Activated CD4-positive, alpha-beta T cell treated with anti-CD3 and anti-CD28 coated beads, Interleukin-2, amount 10 ng/mL, durations not matched to agents 24 days and 14 days (primary cell): ENCODE measurements at regions of chr2 and their contacts with region 1.

Region 1: DNA sequence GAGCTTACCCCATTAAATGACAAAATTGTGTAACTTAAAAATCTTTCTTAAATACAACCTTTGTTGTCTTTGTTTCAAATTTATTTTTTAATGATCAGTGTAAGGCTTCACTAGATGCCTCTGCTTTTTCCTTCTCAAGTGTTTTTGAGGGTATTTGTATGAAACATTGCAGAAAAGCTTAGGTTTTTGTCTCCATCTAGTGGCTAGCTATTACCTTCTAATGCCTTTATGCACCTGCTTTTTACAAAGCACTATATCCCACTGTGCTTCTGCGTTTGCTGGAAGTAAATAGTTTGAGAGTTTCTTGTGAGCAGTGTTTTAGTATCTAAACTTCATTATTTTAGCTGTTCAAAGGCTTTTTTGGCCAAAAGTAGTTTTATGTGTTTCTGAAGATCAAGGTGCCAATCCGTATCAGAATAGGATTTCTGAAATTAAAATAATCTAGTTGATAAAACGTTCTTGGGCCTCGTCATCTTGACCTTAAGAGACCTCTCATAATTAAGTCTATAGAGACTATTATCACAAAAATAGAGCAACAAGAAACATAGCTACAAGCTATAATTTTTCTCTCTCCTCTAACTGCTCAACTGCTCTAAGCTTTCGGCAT is 47.0 kb downstream of the IWS1 start:
- DNase-seq: no peak
- H3K4me3 Mint-ChIP-seq: no peak overlapping the region
- H3K27ac Mint-ChIP-seq: no peak overlapping the region
- H3K4me1 Mint-ChIP-seq: no peaks in the 10 kb centered on the region
- H3K27me3 Mint-ChIP-seq: no peaks in the 10 kb centered on the region

Region 2: GRCh38 chr2:127197475-127198385 is 281.6 kb before region 1 on chr2:
- intact Hi-C with region 1: loop called (anchors 5 kb)
- DNase-seq: peak; percentile 85
- H3K4me3 Mint-ChIP-seq: peak overlapping the region; percentile 76
- H3K27ac Mint-ChIP-seq: no peak overlapping the region
- H3K4me1 Mint-ChIP-seq: peaks cover 7% of the 10 kb centered on the region
- H3K27me3 Mint-ChIP-seq: no peaks in the 10 kb centered on the region

Region 3: GRCh38 chr2:127293748-127294562 is 185.4 kb before region 1 on chr2 and contains the start of gene ERCC3:
- intact Hi-C with region 1: loop called (anchors 5 kb)
- DNase-seq: peak; percentile 95
- H3K4me3 Mint-ChIP-seq: peak within 1 kb of the TSS; percentile 99
- H3K27ac Mint-ChIP-seq: peak within 1 kb of the TSS; percentile 98
- H3K4me1 Mint-ChIP-seq: peaks cover 23% of the 10 kb centered on the region
- H3K27me3 Mint-ChIP-seq: no peaks in the 10 kb centered on the region
- total RNA-seq, gene ERCC3: 58.1 and 60.2 TPM in 2 replicates

Region 4: DNA sequence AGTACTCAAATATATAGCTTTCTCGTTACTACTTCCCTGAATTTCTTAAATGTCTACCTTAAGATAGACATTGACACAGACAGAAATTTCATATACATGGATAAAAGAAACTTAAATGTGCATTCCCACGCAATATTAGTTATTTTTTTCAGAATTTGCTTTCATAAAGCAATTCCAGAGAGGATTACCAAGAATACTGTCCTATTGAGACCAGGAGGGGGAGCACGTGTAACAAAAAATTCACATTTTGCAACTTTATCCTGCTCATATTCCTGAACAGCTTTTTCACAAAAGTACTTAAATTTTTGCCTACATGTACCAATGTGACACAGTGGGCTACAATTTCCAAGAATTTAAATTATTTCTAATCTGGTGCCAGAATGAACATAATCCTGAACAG is 154.7 kb before region 1 on chr2:
- intact Hi-C with region 1: loop called (anchors 2 kb)
- DNase-seq: no peak
- H3K4me3 Mint-ChIP-seq: no peak overlapping the region
- H3K27ac Mint-ChIP-seq: no peak overlapping the region
- H3K4me1 Mint-ChIP-seq: peaks cover 6% of the 10 kb centered on the region
- H3K27me3 Mint-ChIP-seq: no peaks in the 10 kb centered on the region

Region 5: DNA sequence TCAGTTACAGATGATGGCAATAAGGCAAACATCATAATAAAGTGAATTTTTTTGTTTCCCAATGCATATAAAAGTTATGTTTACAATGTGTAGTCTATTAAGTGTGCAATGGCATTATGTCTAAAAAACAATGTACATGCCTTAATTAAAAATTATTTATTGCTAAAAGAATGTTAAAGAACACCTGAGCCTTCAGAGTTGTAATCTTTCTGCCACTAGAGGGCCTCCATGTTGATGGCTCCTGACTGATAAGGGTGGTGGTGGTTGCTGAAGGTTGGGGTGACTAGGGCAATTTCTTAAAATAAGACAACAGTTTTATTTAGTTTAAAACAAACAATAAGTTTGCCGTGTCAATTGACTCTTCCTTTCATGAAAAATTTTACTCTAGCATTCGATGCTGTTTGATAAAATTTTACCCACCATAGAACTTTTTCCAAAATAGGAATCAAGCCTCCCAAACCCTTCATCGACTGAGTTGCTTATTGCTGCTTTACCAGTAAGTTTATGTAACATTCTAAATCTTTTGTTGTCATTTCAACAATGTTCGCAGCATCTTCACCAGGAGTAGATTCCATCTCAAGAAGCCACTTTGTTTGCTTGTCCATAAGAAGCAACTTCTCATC is 123.8 kb before region 1 on chr2:
- intact Hi-C with region 1: loop called (anchors 1 kb)
- DNase-seq: peak; percentile 76
- H3K4me3 Mint-ChIP-seq: no peak overlapping the region
- H3K27ac Mint-ChIP-seq: no peak overlapping the region
- H3K4me1 Mint-ChIP-seq: peaks cover 21% of the 10 kb centered on the region
- H3K27me3 Mint-ChIP-seq: no peaks in the 10 kb centered on the region

Region 6: GRCh38 chr2:127453392-127454171 is 25.7 kb before region 1 on chr2:
- intact Hi-C with region 1: no loop called
- DNase-seq: no peak
- H3K4me3 Mint-ChIP-seq: no peak overlapping the region
- H3K27ac Mint-ChIP-seq: no peak overlapping the region
- H3K4me1 Mint-ChIP-seq: peaks cover 5% of the 10 kb centered on the region
- H3K27me3 Mint-ChIP-seq: no peaks in the 10 kb centered on the region

Region 7: DNA sequence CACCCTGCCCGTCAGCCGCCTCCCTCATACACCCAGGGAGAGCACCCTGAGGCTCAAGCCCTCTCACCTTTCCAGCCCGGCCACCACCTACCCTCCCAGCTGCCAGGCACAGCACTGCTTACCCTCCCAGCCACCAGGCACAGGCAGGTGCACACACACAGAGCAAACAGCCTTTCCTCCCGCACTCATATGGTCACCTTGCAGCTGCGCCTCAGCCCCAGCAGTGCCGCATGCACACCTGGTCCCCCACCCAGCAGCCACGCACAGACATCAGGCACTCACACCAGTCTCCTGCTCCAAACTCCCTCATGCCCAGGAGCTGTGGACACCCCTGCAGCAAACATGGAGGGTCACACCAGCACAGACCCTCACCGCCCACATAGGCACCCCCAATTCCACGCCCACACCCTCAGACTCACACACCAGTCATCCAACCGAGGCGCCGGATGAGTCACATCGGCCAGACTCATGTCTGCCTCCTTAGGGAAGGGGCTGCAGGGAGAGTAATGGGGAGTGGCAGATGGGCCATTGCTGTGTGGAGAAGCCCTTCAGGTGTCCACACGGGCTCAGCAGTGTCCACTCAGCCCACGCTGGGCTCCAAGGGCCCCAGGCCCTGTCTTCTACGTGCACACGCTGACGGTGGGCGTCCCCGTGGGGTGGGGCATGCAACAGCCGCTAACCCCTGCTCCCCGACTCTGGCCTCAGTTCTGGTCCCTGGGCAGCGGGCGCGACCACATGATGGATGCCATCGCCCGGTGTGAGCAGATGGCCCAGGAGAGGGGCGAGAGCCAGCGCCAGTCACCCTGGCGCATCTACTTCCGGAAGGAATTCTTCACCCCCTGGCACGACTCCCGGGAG is 144.3 kb after region 1 on chr2:
- intact Hi-C with region 1: no loop called
- DNase-seq: no peak
- H3K4me3 Mint-ChIP-seq: no peak overlapping the region
- H3K27ac Mint-ChIP-seq: peak overlapping the region; percentile 16
- H3K4me1 Mint-ChIP-seq: no peaks in the 10 kb centered on the region
- H3K27me3 Mint-ChIP-seq: no peaks in the 10 kb centered on the region